SK-N-SH (cell line): ENCODE measurements at regions of chr12 and their contacts with region 1.

Region 1: GRCh38 chr12:38653650-38654049 is 251.7 kb downstream of the CPNE8 start:
- DNase-seq: no peak
- H3K4me3 ChIP-seq: no peak overlapping the region
- H3K27ac ChIP-seq: no peak overlapping the region
- H3K4me1 ChIP-seq: no peaks in the 10 kb centered on the region; a peak in 1 of 4 replicates
- H3K27me3 ChIP-seq: no peaks in the 10 kb centered on the region
- CTCF ChIP-seq: no peak
- EP300 ChIP-seq: no peak
- RAD21 ChIP-seq: no peak

Region 2: GRCh38 chr12:38469715-38470114 is 183.9 kb before region 1 on chr12:
- CTCF ChIA-PET with region 1: no interaction called
- POLR2A ChIA-PET with region 1: no interaction called
- DNase-seq: no peak
- H3K4me3 ChIP-seq: no peak overlapping the region
- H3K27ac ChIP-seq: no peak overlapping the region
- H3K4me1 ChIP-seq: no peaks in the 10 kb centered on the region
- H3K27me3 ChIP-seq: no peaks in the 10 kb centered on the region
- CTCF ChIP-seq: no peak
- EP300 ChIP-seq: no peak
- RAD21 ChIP-seq: no peak

Region 3: GRCh38 chr12:38601949-38602348 is 51.7 kb before region 1 on chr12:
- CTCF ChIA-PET with region 1: no interaction called
- POLR2A ChIA-PET with region 1: no interaction called
- DNase-seq: no peak
- H3K4me3 ChIP-seq: no peak overlapping the region
- H3K27ac ChIP-seq: no peak overlapping the region
- H3K4me1 ChIP-seq: no peaks in the 10 kb centered on the region
- H3K27me3 ChIP-seq: no peaks in the 10 kb centered on the region
- CTCF ChIP-seq: no peak
- EP300 ChIP-seq: no peak
- RAD21 ChIP-seq: no peak

Region 4: DNA sequence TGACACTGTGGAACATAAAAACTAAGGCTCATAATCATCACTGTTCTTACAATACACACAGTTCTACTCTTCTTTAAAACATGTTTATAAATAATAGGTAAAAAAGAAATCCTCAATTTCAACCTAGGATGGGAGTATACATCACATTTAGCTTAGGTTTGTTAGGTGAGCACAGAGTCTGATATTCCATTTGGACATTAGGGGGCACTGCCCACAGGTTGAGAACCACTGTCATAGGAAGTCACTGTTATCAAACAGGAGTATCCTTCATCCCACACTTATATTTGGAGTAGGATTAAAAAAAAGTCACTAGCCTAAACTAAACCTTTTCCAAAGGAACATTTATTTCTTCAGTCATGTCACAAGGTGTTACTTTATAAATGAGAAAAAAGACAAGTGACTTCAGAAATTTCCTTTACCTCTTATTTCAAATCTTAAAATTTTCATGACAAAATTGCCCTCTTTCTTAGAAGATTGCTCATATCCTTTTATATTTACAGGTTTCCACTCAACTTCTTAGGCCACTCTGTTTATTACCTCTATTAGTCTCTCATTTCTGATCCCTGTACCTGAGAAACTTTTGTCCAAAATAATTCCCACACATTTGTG is 11.1 kb after region 1 on chr12:
- CTCF ChIA-PET with region 1: interaction called, 10 read pairs
- POLR2A ChIA-PET with region 1: no interaction called
- DNase-seq: peak; percentile 26
- H3K4me3 ChIP-seq: peak overlapping the region in 1 of 2 experiments; percentile 35; a peak in 1 of 4 replicates
- H3K27ac ChIP-seq: peak overlapping the region in 1 of 2 experiments; percentile 64; a peak in 2 of 4 replicates
- H3K4me1 ChIP-seq: no peaks in the 10 kb centered on the region; a peak in 2 of 4 replicates
- H3K27me3 ChIP-seq: no peaks in the 10 kb centered on the region
- CTCF ChIP-seq: peak; percentile 55
- EP300 ChIP-seq: no peak
- RAD21 ChIP-seq: peak; percentile 60